Sciatic nerve (tissue), 2 donors: ENCODE measurements at regions of chr11 and their contacts with region 1.

Region 1: GRCh38 chr11:6362873-6363678 is 27.2 kb upstream of the SMPD1 start:
- DNase-seq: peak; percentile 88
- ATAC-seq: peak; percentile 97

Region 2: DNA sequence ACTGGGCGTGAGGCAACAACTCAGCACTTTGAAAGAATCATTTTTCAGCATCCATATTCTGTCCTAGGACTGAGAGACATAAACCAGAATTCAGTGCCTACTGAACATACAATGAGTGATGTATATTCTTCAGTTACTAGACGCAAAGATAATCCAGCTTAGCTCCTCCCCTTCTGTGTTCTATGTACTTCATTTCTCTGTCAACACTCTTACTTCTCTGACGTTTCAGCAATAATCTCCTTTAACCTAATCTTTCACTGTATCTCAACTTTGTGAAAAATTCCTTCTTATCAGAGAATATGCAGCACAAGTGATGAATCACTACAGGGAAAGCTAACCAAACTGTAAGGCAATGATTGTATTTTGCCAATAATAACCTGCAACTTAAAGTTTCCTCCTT is 1017.2 kb before region 1 on chr11:
- intact Hi-C with region 1: loop called (anchors 5 kb)
- DNase-seq: no peak
- ATAC-seq: no peak

Region 3: DNA sequence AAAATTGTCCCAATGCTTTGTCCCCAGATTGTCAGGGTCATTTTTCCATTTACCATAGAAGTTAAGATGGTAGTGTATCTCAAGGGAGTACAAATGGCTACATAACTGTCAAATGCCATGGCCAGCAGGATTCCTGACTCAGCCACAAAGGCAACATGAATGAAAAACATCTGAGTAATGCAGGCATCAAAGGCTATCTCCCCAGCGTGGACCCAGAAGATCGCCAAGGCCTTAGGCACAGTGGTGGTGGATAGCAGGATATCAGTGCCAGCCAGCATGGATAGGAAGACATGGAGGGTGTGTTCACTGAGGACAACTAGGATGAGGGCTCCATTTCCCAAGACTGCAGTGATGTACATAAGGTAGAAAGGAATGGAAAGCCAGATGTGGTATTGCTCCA is 211.0 kb before region 1 on chr11:
- intact Hi-C with region 1: no loop called
- DNase-seq: no peak
- ATAC-seq: no peak

Region 4: GRCh38 chr11:6251120-6251733 is 111.8 kb before region 1 on chr11:
- intact Hi-C with region 1: loop called (anchors 10 kb)
- DNase-seq: peak; percentile 86
- ATAC-seq: peak; percentile 95